MCF 10A (cell line): ENCODE measurements at regions of chr1 and their contacts with region 1.

Region 1: GRCh38 chr1:161792740-161793139 is 26.6 kb downstream of the ATF6 start:
- DNase-seq: peak; percentile 87
- H3K4me3 Mint-ChIP-seq: no peak overlapping the region
- H3K27ac Mint-ChIP-seq: no peak overlapping the region
- H3K4me1 Mint-ChIP-seq: peaks cover 18% of the 10 kb centered on the region
- H3K27me3 Mint-ChIP-seq: no peaks in the 10 kb centered on the region
- CTCF ChIP-seq: peak; percentile 71

Region 2: DNA sequence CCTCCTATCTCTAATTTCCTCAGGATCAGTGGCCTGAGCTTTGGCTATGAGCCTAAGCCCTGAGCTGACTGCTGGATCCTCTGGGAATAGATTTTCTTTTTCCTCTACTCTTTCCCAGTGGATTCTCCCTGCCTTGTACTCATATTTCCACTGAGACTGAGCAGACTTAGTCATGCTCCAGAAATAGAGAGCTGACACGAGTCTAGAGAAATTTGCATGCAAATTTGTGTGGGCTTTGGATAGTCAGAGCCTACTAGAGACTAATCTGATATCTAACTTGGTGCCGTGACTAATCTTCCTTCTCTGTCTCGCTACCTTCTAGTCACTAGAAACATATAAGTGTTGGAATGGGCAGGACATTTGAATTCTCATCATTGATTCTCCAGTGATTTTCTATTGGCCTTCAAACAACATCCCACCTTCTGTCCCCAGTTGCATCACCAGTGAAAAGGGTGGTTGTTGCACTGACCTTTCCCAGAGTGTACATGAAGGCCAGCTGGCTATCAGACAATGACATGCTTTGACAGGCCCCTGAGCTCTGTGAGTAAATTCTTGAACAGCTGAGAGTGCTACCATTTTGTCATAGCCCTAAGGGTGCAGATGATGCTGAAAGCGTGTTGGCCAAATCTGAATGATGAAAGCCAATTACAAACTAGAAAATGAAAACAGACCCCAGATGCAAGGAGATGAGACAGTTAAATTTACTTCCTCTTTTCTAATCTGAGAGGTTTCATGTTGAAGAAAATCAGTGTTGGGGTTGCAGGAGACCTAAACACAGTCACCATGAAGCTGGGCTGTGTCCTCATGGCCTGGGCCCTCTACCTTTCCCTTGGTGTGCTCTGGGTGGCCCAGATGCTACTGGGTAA is 86.0 kb before region 1 on chr1 and contains the start of gene FCRLA:
- CTCF ChIA-PET with region 1: no interaction called
- POLR2A ChIA-PET with region 1: no interaction called
- intact Hi-C with region 1: no loop called
- DNase-seq: peak; percentile 80
- H3K4me3 Mint-ChIP-seq: no peak within 1 kb of the TSS
- H3K27ac Mint-ChIP-seq: no peak within 1 kb of the TSS
- H3K4me1 Mint-ChIP-seq: peaks cover 7% of the 10 kb centered on the region
- H3K27me3 Mint-ChIP-seq: no peaks in the 10 kb centered on the region
- CTCF ChIP-seq: no peak
- total RNA-seq, gene FCRLA: 0.30 and 0.47 TPM in 2 replicates

Region 3: DNA sequence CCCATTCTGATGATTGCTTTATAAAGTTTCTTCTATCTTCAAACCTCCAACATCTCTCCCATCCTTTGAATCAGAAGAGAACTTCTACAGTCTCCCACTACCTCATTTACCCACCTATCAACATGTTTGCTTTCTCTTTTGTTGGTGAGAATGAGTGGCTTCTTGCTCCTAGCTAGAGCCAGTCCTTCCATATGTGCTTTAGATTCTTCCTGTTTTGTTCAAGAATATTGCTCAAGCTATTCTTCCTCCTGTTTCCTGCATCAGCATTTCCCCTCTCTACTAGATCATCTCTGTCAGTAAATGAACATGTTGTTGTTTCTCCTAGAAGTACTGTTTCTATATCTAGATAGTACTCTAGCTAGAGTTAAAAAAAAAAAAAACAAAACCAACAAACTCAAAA is 20.3 kb before region 1 on chr1:
- CTCF ChIA-PET with region 1: interaction called, 16 read pairs
- POLR2A ChIA-PET with region 1: no interaction called
- intact Hi-C with region 1: no loop called
- DNase-seq: no peak
- H3K4me3 Mint-ChIP-seq: no peak overlapping the region
- H3K27ac Mint-ChIP-seq: no peak overlapping the region
- H3K4me1 Mint-ChIP-seq: peaks cover 12% of the 10 kb centered on the region
- H3K27me3 Mint-ChIP-seq: no peaks in the 10 kb centered on the region
- CTCF ChIP-seq: no peak

Region 4: GRCh38 chr1:161816201-161816600 is 23.5 kb after region 1 on chr1:
- CTCF ChIA-PET with region 1: interaction called, 13 read pairs
- POLR2A ChIA-PET with region 1: interaction called, 5 read pairs
- intact Hi-C with region 1: no loop called
- DNase-seq: no peak
- H3K4me3 Mint-ChIP-seq: no peak overlapping the region
- H3K27ac Mint-ChIP-seq: no peak overlapping the region
- H3K4me1 Mint-ChIP-seq: no peaks in the 10 kb centered on the region
- H3K27me3 Mint-ChIP-seq: no peaks in the 10 kb centered on the region
- CTCF ChIP-seq: no peak

Region 5: DNA sequence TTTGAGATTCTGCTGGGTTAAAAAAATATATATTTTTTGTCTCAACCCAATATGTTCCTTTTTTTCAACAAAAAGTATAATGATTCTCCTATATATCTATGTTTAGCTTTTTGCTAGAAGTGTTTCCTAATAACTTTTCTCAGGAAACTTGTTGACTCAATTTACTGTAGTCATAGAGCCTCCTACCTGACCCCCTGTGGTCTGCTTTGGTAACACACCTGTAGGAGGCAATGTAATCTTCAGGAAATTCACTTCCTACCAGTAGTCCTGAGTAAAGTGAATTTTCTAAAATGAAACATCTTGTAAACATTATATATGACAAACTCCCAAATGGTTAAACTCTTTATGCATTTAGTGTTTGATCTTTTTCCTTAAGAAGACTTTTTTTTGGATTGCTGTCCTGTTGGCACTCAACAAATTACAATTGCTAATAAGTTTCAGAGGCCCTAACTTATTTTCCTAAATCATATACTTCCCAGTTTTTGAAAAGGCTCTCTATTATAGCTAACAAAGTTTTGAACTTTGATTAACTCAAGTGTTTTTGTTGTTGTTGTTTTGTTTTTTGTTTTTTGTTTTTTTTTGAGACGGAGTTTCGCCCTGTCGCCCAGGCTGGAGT is 112.6 kb after region 1 on chr1:
- CTCF ChIA-PET with region 1: interaction called, 32 read pairs
- POLR2A ChIA-PET with region 1: interaction called, 3 read pairs
- intact Hi-C with region 1: loop called (anchors 1 kb)
- DNase-seq: peak; percentile 67
- H3K4me3 Mint-ChIP-seq: no peak overlapping the region
- H3K27ac Mint-ChIP-seq: no peak overlapping the region
- H3K4me1 Mint-ChIP-seq: peaks cover 9% of the 10 kb centered on the region
- H3K27me3 Mint-ChIP-seq: no peaks in the 10 kb centered on the region
- CTCF ChIP-seq: peak; percentile 52

Region 6: GRCh38 chr1:161954050-161954449 is 161.3 kb after region 1 on chr1:
- CTCF ChIA-PET with region 1: interaction called, 18 read pairs
- POLR2A ChIA-PET with region 1: no interaction called
- intact Hi-C with region 1: no loop called
- DNase-seq: no peak
- H3K4me3 Mint-ChIP-seq: no peak overlapping the region
- H3K27ac Mint-ChIP-seq: peak overlapping the region; percentile 28
- H3K4me1 Mint-ChIP-seq: peaks cover 23% of the 10 kb centered on the region
- H3K27me3 Mint-ChIP-seq: no peaks in the 10 kb centered on the region
- CTCF ChIP-seq: no peak

Region 7: DNA sequence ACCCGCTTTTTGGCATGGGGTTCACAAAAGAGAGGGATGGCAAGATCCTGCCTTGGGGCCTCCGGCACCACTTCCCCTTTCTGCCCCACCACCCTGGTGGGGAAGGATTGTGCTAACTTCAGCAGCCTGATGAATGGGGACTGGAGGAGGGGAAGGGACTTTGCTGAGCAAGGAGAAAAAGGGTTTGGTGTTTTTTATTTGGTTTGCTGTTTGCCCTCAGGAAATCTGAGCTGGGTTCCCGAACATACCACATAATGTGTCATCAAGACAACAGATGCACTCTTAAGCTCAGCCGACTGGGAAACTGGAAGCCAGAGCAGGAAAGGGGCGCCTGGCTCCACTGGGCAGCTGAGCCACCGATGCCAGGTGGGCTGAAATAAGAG is 211.1 kb after region 1 on chr1:
- CTCF ChIA-PET with region 1: interaction called, 13 read pairs
- POLR2A ChIA-PET with region 1: no interaction called
- intact Hi-C with region 1: no loop called
- DNase-seq: peak; percentile 91
- H3K4me3 Mint-ChIP-seq: peak overlapping the region; percentile 13
- H3K27ac Mint-ChIP-seq: peak overlapping the region; percentile 46
- H3K4me1 Mint-ChIP-seq: peaks cover 17% of the 10 kb centered on the region
- H3K27me3 Mint-ChIP-seq: no peaks in the 10 kb centered on the region
- CTCF ChIP-seq: no peak

Region 8: DNA sequence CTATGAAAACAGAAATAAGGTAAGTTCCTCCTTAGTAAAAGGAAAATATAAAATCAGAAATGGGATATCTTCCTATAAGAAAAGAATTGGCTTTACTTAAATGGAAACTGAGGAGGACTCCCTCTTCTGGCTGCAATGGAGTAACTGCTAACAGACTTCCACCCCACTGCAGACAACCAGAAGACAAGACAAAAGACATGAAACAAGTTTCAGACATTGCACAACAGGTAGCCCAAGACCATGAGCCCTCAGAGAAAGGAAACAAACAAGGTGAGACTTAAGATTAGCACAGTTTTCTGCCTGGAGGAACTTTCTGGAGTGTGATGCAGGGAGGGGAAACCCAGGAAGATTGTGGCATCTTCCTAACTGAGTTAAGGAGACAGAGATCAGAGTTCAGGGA is 247.9 kb after region 1 on chr1:
- CTCF ChIA-PET with region 1: interaction called, 508 read pairs
- POLR2A ChIA-PET with region 1: interaction called, 67 read pairs
- intact Hi-C with region 1: loop called (anchors 1 kb)
- DNase-seq: peak; percentile 67
- H3K4me3 Mint-ChIP-seq: no peak overlapping the region
- H3K27ac Mint-ChIP-seq: no peak overlapping the region
- H3K4me1 Mint-ChIP-seq: peaks cover 6% of the 10 kb centered on the region
- H3K27me3 Mint-ChIP-seq: no peaks in the 10 kb centered on the region
- CTCF ChIP-seq: peak; percentile 23

Region 9: GRCh38 chr1:162240568-162240967 is 447.8 kb after region 1 on chr1:
- CTCF ChIA-PET with region 1: no interaction called
- POLR2A ChIA-PET with region 1: no interaction called
- intact Hi-C with region 1: no loop called
- DNase-seq: no peak
- H3K4me3 Mint-ChIP-seq: no peak overlapping the region
- H3K27ac Mint-ChIP-seq: no peak overlapping the region
- H3K4me1 Mint-ChIP-seq: no peaks in the 10 kb centered on the region
- H3K27me3 Mint-ChIP-seq: no peaks in the 10 kb centered on the region
- CTCF ChIP-seq: no peak

Region 10: GRCh38 chr1:162596514-162597170 is 803.9 kb after region 1 on chr1:
- CTCF ChIA-PET with region 1: no interaction called
- POLR2A ChIA-PET with region 1: no interaction called
- intact Hi-C with region 1: no loop called
- DNase-seq: no peak
- H3K4me3 Mint-ChIP-seq: no peak overlapping the region
- H3K27ac Mint-ChIP-seq: no peak overlapping the region
- H3K4me1 Mint-ChIP-seq: no peaks in the 10 kb centered on the region
- H3K27me3 Mint-ChIP-seq: no peaks in the 10 kb centered on the region
- CTCF ChIP-seq: no peak